OCI-LY7 (cell line): ENCODE measurements at regions of chr19 and their contacts with region 1.

Region 1: DNA sequence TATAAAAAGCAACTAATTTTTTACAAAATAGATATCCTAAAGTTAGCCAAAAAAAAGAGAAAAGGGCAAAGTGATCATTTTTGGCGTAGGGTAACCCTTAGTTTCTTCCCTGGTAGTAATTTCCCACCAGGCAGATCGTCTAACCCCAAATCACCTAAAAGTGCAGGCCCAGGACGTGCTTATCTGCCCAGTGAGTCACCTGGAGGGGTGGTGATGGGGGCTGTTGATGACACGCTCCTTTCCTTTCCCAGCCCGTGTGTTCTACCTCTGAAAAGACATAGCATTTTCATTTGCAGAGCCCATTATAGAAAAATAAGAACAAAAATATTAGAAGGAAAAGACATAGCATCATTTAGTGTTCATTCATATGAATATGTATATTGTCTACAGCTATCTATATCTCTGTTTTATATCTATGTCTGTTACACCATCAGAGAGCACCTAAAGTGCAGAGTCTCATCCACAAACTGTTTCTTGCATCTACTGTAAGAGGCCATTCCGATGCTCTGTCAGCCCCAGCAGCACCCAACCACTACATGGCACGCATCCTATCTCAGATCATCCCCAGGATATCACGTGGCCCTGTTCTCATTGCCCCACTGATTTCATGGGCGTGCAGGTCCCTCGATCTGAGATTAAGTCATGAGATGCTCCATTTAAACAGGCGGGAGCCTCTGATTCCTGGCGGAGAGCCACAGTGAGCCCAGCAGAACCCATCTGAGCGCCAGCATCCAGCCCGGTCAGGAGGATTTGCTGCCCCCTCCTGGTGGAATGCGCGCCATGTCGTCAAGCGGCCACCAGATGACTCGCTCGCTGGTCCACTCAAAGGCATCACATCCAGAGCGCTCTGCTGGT is 8.5 kb upstream of the LILRB3 start:
- DNase-seq: peak; percentile 76
- H3K4me3 ChIP-seq: no peak overlapping the region
- H3K27ac ChIP-seq: no peak overlapping the region
- H3K4me1 ChIP-seq: no peaks in the 10 kb centered on the region
- CTCF ChIP-seq: peak; percentile 99

Region 2: GRCh38 chr19:54168174-54168917 is 63.0 kb before region 1 on chr19:
- CTCF ChIA-PET with region 1: no interaction called
- POLR2A ChIA-PET with region 1: no interaction called
- intact Hi-C with region 1: loop called (anchors 1 kb)
- DNase-seq: peak; percentile 84
- H3K4me3 ChIP-seq: no peak overlapping the region
- H3K27ac ChIP-seq: no peak overlapping the region
- H3K4me1 ChIP-seq: peaks cover 10% of the 10 kb centered on the region
- CTCF ChIP-seq: peak; percentile 80

Region 3: DNA sequence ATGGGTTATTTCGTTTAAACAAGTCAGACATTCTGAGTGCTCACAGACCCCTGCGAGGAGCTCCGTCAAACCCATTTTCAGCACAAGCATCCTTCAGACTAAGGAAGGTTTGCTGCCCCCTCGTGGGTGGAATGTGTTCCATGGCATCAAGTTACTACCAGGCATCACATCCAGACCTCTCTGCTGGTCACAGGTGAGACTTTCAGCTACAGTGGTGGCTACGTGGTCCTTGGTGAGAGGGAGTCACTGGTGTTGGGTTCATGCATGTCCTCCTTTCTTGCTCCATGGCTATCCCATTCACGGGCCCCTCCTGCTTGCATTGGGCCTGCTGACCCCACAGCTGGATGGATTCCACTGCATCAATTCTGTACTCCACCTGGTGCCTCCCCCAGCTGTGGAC is 34.8 kb after region 1 on chr19:
- CTCF ChIA-PET with region 1: interaction called, 10 read pairs
- POLR2A ChIA-PET with region 1: no interaction called
- intact Hi-C with region 1: no loop called
- DNase-seq: peak; percentile 69
- H3K4me3 ChIP-seq: no peak overlapping the region
- H3K27ac ChIP-seq: no peak overlapping the region
- H3K4me1 ChIP-seq: no peaks in the 10 kb centered on the region
- CTCF ChIP-seq: peak; percentile 94

Region 4: GRCh38 chr19:54373781-54374631 is 142.7 kb after region 1 on chr19:
- CTCF ChIA-PET with region 1: no interaction called
- POLR2A ChIA-PET with region 1: no interaction called
- intact Hi-C with region 1: no loop called
- DNase-seq: no peak
- H3K4me3 ChIP-seq: no peak overlapping the region
- H3K27ac ChIP-seq: no peak overlapping the region
- H3K4me1 ChIP-seq: peaks cover 58% of the 10 kb centered on the region
- CTCF ChIP-seq: no peak